Cardiac septum (tissue), 1 donor: ENCODE measurements at regions of chr6 and their contacts with region 1.

Region 1: DNA sequence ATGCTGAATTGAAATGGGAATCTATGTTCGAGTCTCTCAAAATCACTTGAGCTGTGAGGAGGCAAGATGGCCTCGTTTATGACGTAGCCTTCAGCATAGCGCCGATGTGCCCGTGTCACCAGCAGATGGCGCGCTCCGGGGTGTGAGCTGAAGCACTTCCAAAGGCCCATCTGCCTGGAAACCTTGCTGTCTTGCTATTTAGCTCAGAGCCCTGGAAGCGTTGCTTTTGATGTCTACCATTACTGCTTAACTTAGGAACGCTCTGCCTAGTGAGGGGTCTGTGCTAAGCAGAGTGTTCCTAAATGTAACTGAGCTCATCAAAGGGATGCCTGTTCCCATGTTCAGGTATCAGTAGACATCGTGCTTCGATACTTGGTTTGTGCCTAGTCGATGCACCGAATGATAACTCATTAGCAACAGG is 67.7 kb downstream of the SYCP2L start:
- DNase-seq: no peak

Region 2: DNA sequence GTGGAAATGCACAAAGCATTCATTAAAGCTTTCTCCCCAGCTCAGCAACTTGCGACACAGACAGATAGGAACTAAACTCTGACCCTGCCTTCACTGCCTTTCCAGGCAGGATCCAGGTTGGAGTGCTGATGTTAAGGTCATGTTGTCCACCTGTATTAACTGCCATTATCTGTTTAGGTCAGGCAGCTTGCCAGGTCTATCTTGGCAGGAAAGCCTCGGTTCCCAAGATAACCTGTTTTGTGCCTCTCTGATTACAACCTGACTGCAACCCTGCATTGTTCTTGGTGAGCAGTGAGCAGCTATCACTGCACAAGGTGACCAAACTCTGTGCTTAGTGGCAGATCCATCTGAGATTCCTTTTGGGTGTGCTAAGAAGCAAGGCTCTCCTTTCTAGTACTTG is 112.7 kb after region 1 on chr6:
- intact Hi-C with region 1: loop called (anchors 2 kb)
- DNase-seq: no peak

Region 3: DNA sequence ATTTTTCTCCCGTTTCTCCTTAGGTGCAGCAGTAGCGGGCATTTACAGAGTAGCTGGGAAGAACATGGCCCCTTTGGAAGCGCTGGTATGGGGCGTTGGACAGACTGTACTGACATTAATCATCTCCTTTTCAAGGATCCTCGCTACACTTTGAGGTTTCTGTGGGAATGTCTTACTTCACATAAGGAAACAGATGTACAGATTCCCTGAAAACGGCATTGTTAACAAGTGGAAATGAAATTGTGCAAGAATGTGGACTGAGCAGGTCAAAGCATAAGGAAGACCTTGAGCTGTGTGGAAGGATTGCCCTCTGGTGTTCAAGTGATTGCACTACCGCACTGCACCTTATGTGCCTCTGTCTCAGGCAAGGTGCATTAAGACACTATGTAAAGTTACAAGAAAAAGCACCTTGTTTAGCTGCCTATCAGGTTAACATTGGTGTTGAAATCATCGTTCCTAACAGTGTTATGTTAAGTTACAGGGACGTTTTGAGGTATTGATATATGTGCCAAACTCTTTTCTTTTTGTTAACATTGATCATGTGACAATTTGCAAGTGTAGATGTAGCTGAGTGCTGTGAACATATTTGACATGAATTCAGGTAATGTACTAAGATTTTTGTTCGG is 620.9 kb after region 1 on chr6:
- intact Hi-C with region 1: loop called (anchors 10 kb)
- DNase-seq: no peak